ENCODE measurements at regions of chr2 and their contacts with region 1.

Region 1: GRCh38 chr2:231604685-231605606 is 12.3 kb downstream of the TEX44 start:
- DNase-seq: peak; percentile 95
- H3K4me3 ChIP-seq: peak overlapping the region; percentile 44
- H3K4me3 Mint-ChIP-seq: peak overlapping the region; percentile 63
- H3K27ac Mint-ChIP-seq: peak overlapping the region; percentile 96
- H3K4me1 ChIP-seq: peaks cover 11% of the 10 kb centered on the region
- H3K4me1 Mint-ChIP-seq: peaks cover 8% of the 10 kb centered on the region
- H3K27me3 ChIP-seq: no peaks in the 10 kb centered on the region
- H3K27me3 Mint-ChIP-seq: no peaks in the 10 kb centered on the region
- CTCF ChIP-seq: peak in 1 of 2 experiments; percentile 22

Region 2: DNA sequence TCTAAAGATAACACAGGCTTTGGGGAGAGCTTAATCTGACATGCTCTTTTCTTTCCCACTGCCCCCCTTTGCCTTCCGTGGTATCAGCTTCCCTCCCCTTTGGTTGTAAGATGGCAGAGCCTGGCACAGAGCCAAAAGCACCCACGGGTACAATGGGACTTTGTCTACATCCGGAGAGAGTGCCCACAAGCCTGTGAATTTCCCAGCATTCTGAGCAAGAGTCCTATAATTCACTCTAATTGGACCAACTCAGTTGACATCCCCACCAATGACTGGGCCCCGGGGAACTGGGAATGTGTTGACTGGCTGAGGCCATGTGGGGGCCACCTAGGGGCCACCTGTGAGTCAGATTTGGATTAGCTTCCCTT is 587.7 kb before region 1 on chr2:
- CTCF ChIA-PET with region 1: no interaction called
- POLR2A ChIA-PET with region 1: no interaction called
- intact Hi-C with region 1: no loop called
- DNase-seq: no peak
- H3K4me3 ChIP-seq: no peak overlapping the region
- H3K4me3 Mint-ChIP-seq: no peak overlapping the region
- H3K27ac Mint-ChIP-seq: peak overlapping the region; percentile 79
- H3K4me1 ChIP-seq: peaks cover 44% of the 10 kb centered on the region
- H3K4me1 Mint-ChIP-seq: peaks cover 30% of the 10 kb centered on the region
- H3K27me3 ChIP-seq: no peaks in the 10 kb centered on the region
- H3K27me3 Mint-ChIP-seq: no peaks in the 10 kb centered on the region
- CTCF ChIP-seq: no peak

Region 3: GRCh38 chr2:231563378-231563961 is 41.5 kb before region 1 on chr2:
- CTCF ChIA-PET with region 1: interaction called, 18 read pairs
- POLR2A ChIA-PET with region 1: no interaction called
- intact Hi-C with region 1: loop called (anchors 1 kb)
- DNase-seq: peak; percentile 64 to 67
- H3K4me3 ChIP-seq: no peak overlapping the region
- H3K4me3 Mint-ChIP-seq: no peak overlapping the region
- H3K27ac Mint-ChIP-seq: no peak overlapping the region
- H3K4me1 ChIP-seq: no peaks in the 10 kb centered on the region
- H3K4me1 Mint-ChIP-seq: no peaks in the 10 kb centered on the region
- H3K27me3 ChIP-seq: no peaks in the 10 kb centered on the region
- H3K27me3 Mint-ChIP-seq: no peaks in the 10 kb centered on the region
- CTCF ChIP-seq: peak; percentile 72

Region 4: GRCh38 chr2:231573698-231574421 is 31.1 kb before region 1 on chr2:
- CTCF ChIA-PET with region 1: no interaction called
- POLR2A ChIA-PET with region 1: no interaction called
- intact Hi-C with region 1: no loop called
- DNase-seq: no peak
- H3K4me3 ChIP-seq: no peak overlapping the region
- H3K4me3 Mint-ChIP-seq: no peak overlapping the region
- H3K27ac Mint-ChIP-seq: no peak overlapping the region
- H3K4me1 ChIP-seq: no peaks in the 10 kb centered on the region; the same call in 1 of the 2 replicates
- H3K4me1 Mint-ChIP-seq: no peaks in the 10 kb centered on the region
- H3K27me3 ChIP-seq: no peaks in the 10 kb centered on the region
- H3K27me3 Mint-ChIP-seq: no peaks in the 10 kb centered on the region
- CTCF ChIP-seq: no peak

Region 5: GRCh38 chr2:231732604-231733003 is 127.7 kb after region 1 on chr2:
- CTCF ChIA-PET with region 1: no interaction called
- POLR2A ChIA-PET with region 1: no interaction called
- intact Hi-C with region 1: no loop called
- DNase-seq: peak in 1 of 2 experiments; percentile 8
- H3K4me3 ChIP-seq: no peak overlapping the region
- H3K4me3 Mint-ChIP-seq: no peak overlapping the region
- H3K27ac Mint-ChIP-seq: no peak overlapping the region
- H3K4me1 ChIP-seq: no peaks in the 10 kb centered on the region
- H3K4me1 Mint-ChIP-seq: no peaks in the 10 kb centered on the region
- H3K27me3 ChIP-seq: no peaks in the 10 kb centered on the region
- H3K27me3 Mint-ChIP-seq: no peaks in the 10 kb centered on the region
- CTCF ChIP-seq: no peak

Measured in Caco-2 (cell line).